H1 (cell line): ENCODE measurements at regions of chr11 and their contacts with region 1.

Region 1: DNA sequence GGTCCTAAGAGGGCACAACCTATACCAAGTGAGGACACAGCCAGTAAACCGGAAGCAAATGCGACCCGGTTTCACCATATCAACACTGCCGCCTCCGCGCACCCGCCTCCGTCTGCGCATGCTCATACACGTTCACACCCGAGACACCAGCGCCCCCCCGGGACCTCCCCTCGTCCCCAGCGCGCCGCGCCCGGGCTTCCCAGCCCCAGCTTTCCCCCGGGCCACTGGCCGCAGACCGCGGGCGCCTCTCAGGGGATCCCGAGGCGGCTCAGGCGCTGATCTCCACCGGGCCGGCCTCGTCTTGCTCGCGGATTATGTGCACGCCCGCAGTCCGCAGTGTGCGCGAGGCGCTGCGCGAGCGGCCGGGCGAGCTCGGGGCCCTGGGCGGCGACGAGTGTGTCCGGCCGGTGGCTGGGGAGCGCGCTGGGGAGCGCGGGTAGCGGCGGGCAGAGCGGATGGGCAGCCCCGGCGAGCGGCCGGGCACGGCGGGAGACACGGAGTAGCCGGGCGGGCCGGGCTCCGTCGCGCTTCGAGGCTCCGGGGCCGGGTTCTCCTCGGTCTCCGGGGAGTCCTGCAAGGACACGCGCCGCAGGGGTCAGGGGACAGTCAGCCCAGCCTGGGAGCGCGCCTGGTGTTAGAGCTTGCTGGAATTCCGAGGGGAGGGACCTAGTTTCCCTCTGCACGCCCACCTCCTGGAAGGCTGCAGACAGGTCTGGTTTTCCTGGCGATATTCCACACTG is 2.0 kb downstream of the HEPN1 start:
- DNase-seq: peak in 1 of 2 experiments; percentile 83
- H3K4me3 ChIP-seq: peak overlapping the region; percentile 35 to 57 (median 44)
- H3K27ac ChIP-seq: no peak overlapping the region
- H3K4me1 ChIP-seq: peaks cover 0 to 4% (median 2%) of the 10 kb centered on the region in 4 experiments; a peak in 3 of 7 replicates
- H3K27me3 ChIP-seq: peaks cover 9 to 59% (median 44%) of the 10 kb centered on the region in 4 experiments
- CTCF ChIP-seq: no peak
- EP300 ChIP-seq: no peak
- POLR2A ChIP-seq: no peak
- RAD21 ChIP-seq: no peak; a peak in 2 of 4 replicates

Region 2: DNA sequence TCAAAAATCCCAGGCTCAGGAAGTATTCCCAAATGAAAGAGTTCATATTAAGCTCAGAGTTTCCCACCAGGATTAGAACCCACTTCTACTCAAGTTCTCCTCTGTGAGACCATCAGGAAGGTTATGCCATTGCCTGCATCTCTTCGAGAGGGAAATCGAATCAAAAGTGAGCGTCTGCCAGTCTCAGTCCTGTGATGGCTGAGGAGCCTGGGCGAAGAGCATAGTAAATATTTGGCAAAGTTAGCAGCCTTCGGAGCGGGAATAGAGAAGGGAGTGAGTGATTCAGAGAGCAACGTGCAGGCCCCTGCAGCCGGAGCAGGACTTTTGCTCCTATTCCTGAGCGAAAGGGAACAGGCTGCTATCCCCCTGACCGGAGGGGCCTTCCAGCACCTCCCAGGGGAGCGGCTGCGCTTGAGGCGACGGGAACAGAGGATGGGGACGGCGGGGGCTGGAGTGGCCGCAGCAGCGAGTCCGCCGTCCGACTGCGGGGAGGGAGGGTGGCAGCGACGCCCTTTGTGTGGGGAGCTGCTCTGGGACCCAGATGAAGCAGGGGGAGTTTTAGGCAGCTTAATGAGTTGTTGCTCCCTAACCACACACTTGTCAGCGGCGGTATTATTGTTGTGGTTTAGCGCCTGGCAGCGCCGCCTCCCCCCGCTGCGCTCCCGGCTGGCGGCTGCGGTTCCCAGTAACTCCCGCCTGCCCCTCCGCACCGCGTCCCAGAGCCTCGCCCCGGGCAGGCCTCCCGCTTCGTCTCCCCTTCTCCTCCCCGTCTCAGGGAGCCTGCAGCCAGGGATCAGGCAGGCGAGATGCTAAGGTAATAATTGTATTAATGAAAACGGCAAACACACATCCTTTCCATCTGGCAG is 203.0 kb before region 1 on chr11:
- CTCF ChIA-PET with region 1: no interaction called
- POLR2A ChIA-PET with region 1: no interaction called
- DNase-seq: peak in 1 of 2 experiments; percentile 67
- H3K4me3 ChIP-seq: peak overlapping the region; percentile 32 to 60 (median 54); a peak in 7 of 8 replicates
- H3K27ac ChIP-seq: no peak overlapping the region
- H3K4me1 ChIP-seq: peaks cover 0 to 5% (median 3%) of the 10 kb centered on the region in 4 experiments; a peak in 5 of 7 replicates
- H3K27me3 ChIP-seq: peaks cover 47 to 80% (median 75%) of the 10 kb centered on the region in 4 experiments
- CTCF ChIP-seq: no peak
- EP300 ChIP-seq: no peak
- POLR2A ChIP-seq: no peak
- RAD21 ChIP-seq: no peak

Region 3: DNA sequence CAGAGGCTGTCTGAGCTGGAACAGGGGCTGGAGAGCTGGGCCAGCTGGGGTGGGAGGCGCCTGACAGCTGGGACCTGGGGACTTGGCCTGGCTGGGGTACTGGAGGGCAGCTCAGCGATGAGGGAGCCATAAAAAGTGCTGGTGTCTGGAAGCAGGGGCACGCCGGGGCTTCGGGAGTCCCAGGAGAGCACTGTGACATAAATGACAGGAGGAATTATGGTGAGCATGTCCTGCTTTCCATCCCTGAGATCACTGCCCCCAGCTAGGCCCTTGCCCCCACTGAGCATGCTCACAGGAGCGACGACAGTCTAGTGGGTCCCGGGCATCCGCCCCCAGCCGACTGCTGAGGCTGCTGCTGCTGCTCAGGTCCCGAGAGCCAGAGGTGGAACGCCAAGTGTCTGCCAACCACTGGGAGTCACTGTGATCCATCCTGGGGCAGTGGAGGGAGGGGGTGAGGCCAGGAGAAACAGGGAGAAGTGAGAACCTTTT is 29.6 kb before region 1 on chr11:
- CTCF ChIA-PET with region 1: interaction called, 16 read pairs
- POLR2A ChIA-PET with region 1: no interaction called
- DNase-seq: peak in 1 of 2 experiments; percentile 51
- H3K4me3 ChIP-seq: no peak overlapping the region
- H3K27ac ChIP-seq: no peak overlapping the region
- H3K4me1 ChIP-seq: no peaks in the 10 kb centered on the region; a peak in 1 of 7 replicates
- H3K27me3 ChIP-seq: peaks cover 0 to 3% (median under 1%) of the 10 kb centered on the region in 4 experiments; a peak in 2 of 7 replicates
- CTCF ChIP-seq: peak; percentile 42 to 65 (median 50)
- EP300 ChIP-seq: no peak
- POLR2A ChIP-seq: no peak
- RAD21 ChIP-seq: peak; percentile 40 to 52

Region 4: GRCh38 chr11:124900464-124900863 is 20.6 kb before region 1 on chr11:
- CTCF ChIA-PET with region 1: interaction called, 11 read pairs
- POLR2A ChIA-PET with region 1: no interaction called
- DNase-seq: peak in 1 of 2 experiments; percentile 43
- H3K4me3 ChIP-seq: no peak overlapping the region
- H3K27ac ChIP-seq: no peak overlapping the region
- H3K4me1 ChIP-seq: peaks cover 0 to 2% (median 1%) of the 10 kb centered on the region in 4 experiments; a peak in 3 of 7 replicates
- H3K27me3 ChIP-seq: peaks cover 0 to 6% (median 0%) of the 10 kb centered on the region in 4 experiments; a peak in 3 of 7 replicates
- CTCF ChIP-seq: no peak
- EP300 ChIP-seq: no peak
- POLR2A ChIP-seq: no peak
- RAD21 ChIP-seq: no peak

Region 5: DNA sequence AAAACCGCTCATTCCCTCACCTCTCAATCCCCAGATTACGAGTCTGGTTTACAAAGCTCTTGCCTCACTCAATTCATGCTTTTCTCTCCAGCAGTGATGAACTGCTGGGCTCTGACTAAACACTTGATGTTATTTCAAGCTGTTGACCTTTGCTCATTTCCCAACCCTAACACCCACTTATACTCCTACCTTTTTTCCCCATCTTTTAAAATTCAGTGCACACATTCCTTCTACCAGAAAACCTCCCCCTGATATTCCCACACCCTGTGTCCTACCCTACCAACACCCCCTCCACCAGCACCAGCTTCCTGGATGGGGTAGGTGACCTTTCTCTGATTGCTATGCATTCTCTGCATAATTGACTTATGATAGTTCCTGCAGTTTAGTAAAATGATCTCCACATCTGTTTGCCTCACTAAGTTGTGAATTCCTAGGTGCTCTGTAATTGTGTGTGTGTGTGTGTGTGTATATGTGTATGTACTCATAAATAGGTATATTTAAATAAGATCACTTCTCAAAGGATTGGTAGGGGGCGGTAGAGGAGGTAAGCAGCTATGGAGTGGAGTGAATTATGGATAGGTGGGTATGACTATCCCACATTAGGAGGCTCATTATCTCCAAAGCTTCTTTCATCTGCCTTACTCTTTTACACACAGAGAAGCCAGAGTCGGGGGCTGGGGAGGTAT is 14.0 kb after region 1 on chr11:
- CTCF ChIA-PET with region 1: interaction called, 38 read pairs
- POLR2A ChIA-PET with region 1: no interaction called
- DNase-seq: no peak
- H3K4me3 ChIP-seq: no peak overlapping the region
- H3K27ac ChIP-seq: no peak overlapping the region
- H3K4me1 ChIP-seq: peaks cover 0 to 3% (median 0%) of the 10 kb centered on the region in 4 experiments; a peak in 1 of 7 replicates
- H3K27me3 ChIP-seq: peaks cover 0 to 2% (median 0%) of the 10 kb centered on the region in 4 experiments; a peak in 4 of 7 replicates
- CTCF ChIP-seq: peak in 2 of 3 experiments; percentile 1 to 14; a peak in 1 of 4 replicates
- EP300 ChIP-seq: no peak
- POLR2A ChIP-seq: no peak
- RAD21 ChIP-seq: 0 out of 4 replicates have a peak, but pooled peaks of 1 of the 2 experiments have one; percentile 2